BJ (cell line): ENCODE measurements at regions of chr1 and their contacts with region 1.

Region 1: GRCh38 chr1:176206961-176207902 is at the start of gene COP1:
- DNase-seq: peak; percentile 74
- H3K4me3 ChIP-seq: peak within 1 kb of the TSS; percentile 97
- H3K27me3 ChIP-seq: no peaks in the 10 kb centered on the region
- CTCF ChIP-seq: no peak
- polyA plus RNA-seq, gene COP1: 14.8 and 31.2 TPM in 2 replicates

Region 2: DNA sequence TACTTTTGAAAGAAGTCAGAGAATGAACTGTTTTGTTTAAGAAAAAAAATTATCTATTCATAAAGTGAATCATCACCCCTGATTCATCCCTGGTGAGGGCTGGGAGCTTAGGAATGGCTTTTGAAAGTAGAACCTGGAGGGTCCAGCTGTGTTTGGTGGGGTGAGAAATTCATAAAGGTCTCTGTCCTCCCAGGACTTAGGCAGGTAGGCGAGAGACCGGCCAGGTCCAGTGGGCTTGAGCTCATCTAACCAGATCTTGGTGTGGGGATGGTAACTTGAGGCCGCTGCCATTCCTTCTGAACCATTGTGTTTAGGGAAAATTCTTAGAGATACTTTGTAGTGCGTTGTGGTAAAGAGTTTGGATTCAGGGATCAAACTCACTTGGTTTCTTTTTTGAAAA is 307.1 kb before region 1 on chr1:
- CTCF ChIA-PET with region 1: no interaction called
- POLR2A ChIA-PET with region 1: no interaction called
- DNase-seq: no peak
- H3K4me3 ChIP-seq: no peak overlapping the region
- H3K27me3 ChIP-seq: no peaks in the 10 kb centered on the region
- CTCF ChIP-seq: no peak

Region 3: GRCh38 chr1:176241385-176242015 is 34.3 kb after region 1 on chr1:
- CTCF ChIA-PET with region 1: no interaction called
- POLR2A ChIA-PET with region 1: interaction called, 19 read pairs
- DNase-seq: peak; percentile 53
- H3K4me3 ChIP-seq: no peak overlapping the region; the same call in 1 of the 2 replicates
- H3K27me3 ChIP-seq: no peaks in the 10 kb centered on the region
- CTCF ChIP-seq: no peak